ENCODE measurements at regions of chr10 and their contacts with region 1.

Region 1: DNA sequence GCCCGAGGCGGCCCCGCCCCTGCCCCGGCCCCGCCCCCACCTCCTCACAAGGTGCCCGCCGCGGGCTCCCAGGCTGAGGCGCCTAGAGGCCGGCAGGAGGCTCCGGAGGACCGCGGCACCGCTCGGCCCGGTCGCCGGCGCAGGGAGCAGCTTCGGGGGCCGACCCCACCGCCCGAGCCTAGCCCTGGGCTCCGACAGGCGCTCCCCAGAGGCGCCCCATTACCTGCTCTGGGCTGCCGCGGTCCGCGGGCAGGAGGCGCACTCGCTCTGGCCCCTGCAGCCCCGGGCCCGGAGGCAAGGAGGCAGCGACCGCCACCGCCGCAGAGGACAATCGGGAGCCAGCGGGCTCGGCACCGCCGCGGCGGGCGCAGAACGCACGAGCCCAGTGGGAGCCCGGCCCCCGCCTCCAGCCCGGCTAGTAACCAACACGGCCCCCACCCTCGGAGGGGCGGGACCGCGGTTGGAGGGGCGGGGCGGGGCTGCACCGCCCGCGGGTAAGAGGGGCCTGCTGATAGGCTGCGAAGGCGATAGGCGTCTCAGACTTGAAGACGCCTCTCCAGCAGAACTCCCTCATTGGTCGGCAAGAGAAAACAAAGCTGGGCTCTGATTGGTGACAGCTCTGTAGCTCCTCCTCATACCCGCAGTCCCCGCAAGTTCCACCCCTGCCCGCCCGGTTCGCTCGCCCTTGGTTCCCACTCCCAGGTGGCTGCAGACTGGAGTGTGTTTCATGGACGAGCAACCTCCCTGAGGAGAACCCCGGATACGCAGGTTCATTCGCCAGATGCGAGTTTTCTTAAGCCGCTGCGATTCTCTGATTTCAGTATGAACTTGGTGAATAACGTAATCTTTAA is at the start of gene MPP7:
- DNase-seq: peak; percentile 96 to 98 (median 97)
- ATAC-seq: peak; percentile 97
- H3K4me3 ChIP-seq: peak within 1 kb of the TSS; percentile 92
- H3K4me3 Mint-ChIP-seq: peak within 1 kb of the TSS; percentile 85 to 99 (median 93)
- H3K27ac ChIP-seq: peak within 1 kb of the TSS; percentile 86
- H3K27ac Mint-ChIP-seq: peak within 1 kb of the TSS; percentile 67 to 98 (median 94)
- H3K4me1 ChIP-seq: peaks cover 8 to 42% of the 10 kb centered on the region in 2 donors
- H3K4me1 Mint-ChIP-seq: peaks cover 27 to 80% (median 67%) of the 10 kb centered on the region in 7 donors
- H3K27me3 ChIP-seq: no peaks in the 10 kb centered on the region
- H3K27me3 Mint-ChIP-seq: peaks cover 0 to 51% (median 0%) of the 10 kb centered on the region in 5 donors
- total RNA-seq, gene MPP7: 9.7 to 44.7 (median 36.1) TPM

Region 2: GRCh38 chr10:28179006-28179742 is 123.7 kb before region 1 on chr10:
- CTCF ChIA-PET with region 1: no interaction called
- POLR2A ChIA-PET with region 1: no interaction called
- intact Hi-C with region 1: loop called (anchors 1 to 2 kb)
- DNase-seq: peak in 7 of 9 donors; percentile 18 to 63 (median 49)
- ATAC-seq: peak; percentile 86
- H3K4me3 ChIP-seq: peak overlapping the region; percentile 55
- H3K4me3 Mint-ChIP-seq: peak overlapping the region; percentile 0 to 98 (median 87)
- H3K27ac ChIP-seq: peak overlapping the region; percentile 54
- H3K27ac Mint-ChIP-seq: peak overlapping the region; percentile 77 to 98 (median 92)
- H3K4me1 ChIP-seq: peaks cover 10 to 12% of the 10 kb centered on the region in 2 donors
- H3K4me1 Mint-ChIP-seq: peaks cover 17 to 70% (median 55%) of the 10 kb centered on the region in 7 donors
- H3K27me3 ChIP-seq: no peaks in the 10 kb centered on the region
- H3K27me3 Mint-ChIP-seq: peaks cover 0 to 9% (median 0%) of the 10 kb centered on the region in 5 donors

Region 3: GRCh38 chr10:28250782-28251181 is 52.1 kb before region 1 on chr10:
- CTCF ChIA-PET with region 1: interaction called, 9 read pairs
- POLR2A ChIA-PET with region 1: interaction called, 6 read pairs
- intact Hi-C with region 1: loop called (anchors 1 kb)
- DNase-seq: peak in 5 of 9 donors; percentile 24 to 47 (median 43)
- ATAC-seq: peak; percentile 57
- H3K4me3 ChIP-seq: no peak overlapping the region
- H3K4me3 Mint-ChIP-seq: no peak overlapping the region
- H3K27ac ChIP-seq: no peak overlapping the region
- H3K27ac Mint-ChIP-seq: peak overlapping the region in 5 of 9 donors; percentile 3 to 80 (median 29)
- H3K4me1 ChIP-seq: no peaks in the 10 kb centered on the region
- H3K4me1 Mint-ChIP-seq: peaks cover 10 to 72% (median 50%) of the 10 kb centered on the region in 7 donors
- H3K27me3 ChIP-seq: no peaks in the 10 kb centered on the region
- H3K27me3 Mint-ChIP-seq: peaks cover 0 to 8% (median 0%) of the 10 kb centered on the region in 5 donors

Region 4: DNA sequence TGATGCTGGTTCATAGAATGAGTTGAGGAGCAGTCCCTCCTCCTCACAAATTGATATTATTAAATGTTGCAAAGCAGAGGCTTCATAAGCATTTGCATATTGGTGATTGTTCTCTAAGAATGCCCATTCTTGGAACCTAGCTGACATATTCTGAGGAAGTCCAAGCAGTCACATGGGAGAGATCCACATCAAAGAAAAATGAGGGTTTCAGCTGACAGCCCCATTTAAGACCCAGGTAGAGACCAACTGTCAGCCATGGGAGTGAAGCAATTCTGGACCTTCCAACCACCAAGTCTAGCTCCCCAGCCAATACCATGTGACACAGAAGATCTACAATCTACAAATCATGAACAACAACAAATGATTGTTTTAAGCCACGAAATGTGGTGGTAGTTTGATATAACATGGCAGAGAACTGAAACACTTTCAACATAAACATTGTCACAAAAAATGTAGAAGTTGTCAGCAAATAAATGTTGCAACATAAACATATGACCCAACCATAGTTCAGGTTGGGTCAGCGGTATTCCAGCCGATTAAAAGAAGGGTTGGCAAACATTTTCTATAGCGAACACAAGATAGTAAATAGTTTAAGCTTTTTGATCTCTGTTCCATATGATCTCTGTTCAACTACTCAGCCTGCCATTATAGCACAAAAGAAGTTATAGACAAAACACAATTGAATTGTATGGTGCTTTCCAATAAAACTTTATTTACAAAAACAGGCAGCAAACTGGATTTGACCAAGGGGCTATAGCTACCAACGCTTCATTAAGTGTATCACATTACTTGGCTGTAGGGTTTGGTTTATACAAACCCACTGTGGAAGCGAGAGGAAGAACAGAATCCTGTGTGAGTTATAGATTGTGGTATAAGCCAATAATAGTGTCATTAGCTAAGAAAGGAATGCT is 41.4 kb after region 1 on chr10:
- CTCF ChIA-PET with region 1: interaction called, 5 read pairs
- POLR2A ChIA-PET with region 1: interaction called, 11 read pairs
- intact Hi-C with region 1: no loop called
- DNase-seq: no peak
- ATAC-seq: no peak
- H3K4me3 ChIP-seq: no peak overlapping the region
- H3K4me3 Mint-ChIP-seq: no peak overlapping the region
- H3K27ac ChIP-seq: no peak overlapping the region
- H3K27ac Mint-ChIP-seq: peak overlapping the region in 1 of 9 donors; percentile 24
- H3K4me1 ChIP-seq: peaks cover 0 to 4% of the 10 kb centered on the region in 2 donors
- H3K4me1 Mint-ChIP-seq: peaks cover 5 to 16% (median 12%) of the 10 kb centered on the region in 7 donors
- H3K27me3 ChIP-seq: no peaks in the 10 kb centered on the region
- H3K27me3 Mint-ChIP-seq: peaks cover 0 to 25% (median 0%) of the 10 kb centered on the region in 5 donors

Region 5: DNA sequence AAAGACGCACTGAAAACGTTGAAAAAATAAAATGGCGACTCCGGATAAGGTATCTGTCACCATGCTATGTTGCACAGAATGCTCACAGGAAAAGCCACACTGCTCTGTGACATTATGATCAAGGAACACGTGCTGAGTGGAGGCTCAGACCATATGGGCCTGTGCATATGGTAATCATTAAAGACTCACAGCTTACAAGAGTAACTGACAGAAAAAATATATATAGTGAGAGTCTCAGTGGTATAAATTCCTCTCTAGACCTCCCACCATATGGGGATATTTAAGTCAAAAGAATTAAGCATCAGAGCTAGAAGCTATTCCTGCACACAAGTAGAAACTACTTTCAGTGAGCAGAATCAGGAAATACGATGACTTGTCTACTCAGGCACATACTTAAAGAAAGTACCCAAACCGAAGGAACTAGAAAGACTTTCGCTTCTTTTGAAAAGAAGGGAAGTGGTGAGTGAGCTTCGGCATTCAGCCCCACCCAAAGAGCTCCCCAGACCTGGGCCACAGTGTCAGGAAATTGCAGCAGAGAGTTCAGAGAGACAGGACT is 65.1 kb after region 1 on chr10:
- CTCF ChIA-PET with region 1: interaction called, 45 read pairs
- POLR2A ChIA-PET with region 1: interaction called, 58 read pairs
- intact Hi-C with region 1: loop called (anchors 1 kb)
- DNase-seq: peak in 8 of 9 donors; percentile 54 to 88 (median 83)
- ATAC-seq: peak; percentile 97
- H3K4me3 ChIP-seq: peak overlapping the region; percentile 18
- H3K4me3 Mint-ChIP-seq: peak overlapping the region; percentile 63 to 93 (median 76)
- H3K27ac ChIP-seq: peak overlapping the region; percentile 78
- H3K27ac Mint-ChIP-seq: peak overlapping the region; percentile 90 to 99 (median 96)
- H3K4me1 ChIP-seq: peaks cover 44 to 54% of the 10 kb centered on the region in 2 donors
- H3K4me1 Mint-ChIP-seq: peaks cover 39 to 80% (median 60%) of the 10 kb centered on the region in 7 donors
- H3K27me3 ChIP-seq: no peaks in the 10 kb centered on the region
- H3K27me3 Mint-ChIP-seq: peaks cover 0 to 5% (median 0%) of the 10 kb centered on the region in 5 donors

Region 6: GRCh38 chr10:28393966-28394568 is 91.2 kb after region 1 on chr10:
- CTCF ChIA-PET with region 1: interaction called, 6 read pairs
- POLR2A ChIA-PET with region 1: no interaction called
- intact Hi-C with region 1: loop called in 1 of 2 experiments (anchors 1 kb)
- DNase-seq: peak; percentile 36 to 70 (median 53)
- ATAC-seq: peak; percentile 87
- H3K4me3 ChIP-seq: no peak overlapping the region
- H3K4me3 Mint-ChIP-seq: no peak overlapping the region
- H3K27ac ChIP-seq: no peak overlapping the region
- H3K27ac Mint-ChIP-seq: peak overlapping the region in 2 of 9 donors; percentile 12 to 35
- H3K4me1 ChIP-seq: no peaks in the 10 kb centered on the region
- H3K4me1 Mint-ChIP-seq: peaks cover 0 to 6% (median 5%) of the 10 kb centered on the region in 7 donors
- H3K27me3 ChIP-seq: no peaks in the 10 kb centered on the region
- H3K27me3 Mint-ChIP-seq: peaks cover 0 to 6% (median 0%) of the 10 kb centered on the region in 5 donors

Region 7: GRCh38 chr10:28410420-28411135 is 107.7 kb after region 1 on chr10:
- CTCF ChIA-PET with region 1: no interaction called
- POLR2A ChIA-PET with region 1: no interaction called
- intact Hi-C with region 1: no loop called
- DNase-seq: no peak
- ATAC-seq: no peak
- H3K4me3 ChIP-seq: no peak overlapping the region
- H3K4me3 Mint-ChIP-seq: no peak overlapping the region
- H3K27ac ChIP-seq: no peak overlapping the region
- H3K27ac Mint-ChIP-seq: no peak overlapping the region
- H3K4me1 ChIP-seq: no peaks in the 10 kb centered on the region
- H3K4me1 Mint-ChIP-seq: peaks cover 0 to 7% (median 0%) of the 10 kb centered on the region in 7 donors
- H3K27me3 ChIP-seq: peaks cover under 1 to 3% of the 10 kb centered on the region in 2 donors
- H3K27me3 Mint-ChIP-seq: peaks cover 5 to 19% (median 16%) of the 10 kb centered on the region in 5 donors

Region 8: GRCh38 chr10:28676968-28677887 is 374.4 kb after region 1 on chr10 and contains the start of gene BAMBI:
- CTCF ChIA-PET with region 1: no interaction called
- POLR2A ChIA-PET with region 1: no interaction called
- intact Hi-C with region 1: loop called in 1 of 2 experiments (anchors 10 kb)
- DNase-seq: peak; percentile 86 to 95 (median 90)
- ATAC-seq: peak; percentile 97
- H3K4me3 ChIP-seq: peak within 1 kb of the TSS; percentile 57
- H3K4me3 Mint-ChIP-seq: peak within 1 kb of the TSS; percentile 79 to 94 (median 84)
- H3K27ac ChIP-seq: no peak within 1 kb of the TSS
- H3K27ac Mint-ChIP-seq: peak within 1 kb of the TSS in 3 of 9 donors; percentile 24 to 52 (median 43)
- H3K4me1 ChIP-seq: peaks cover 0 to 26% of the 10 kb centered on the region in 2 donors
- H3K4me1 Mint-ChIP-seq: peaks cover 19 to 32% (median 26%) of the 10 kb centered on the region in 7 donors
- H3K27me3 ChIP-seq: peaks cover 11 to 20% of the 10 kb centered on the region in 2 donors
- H3K27me3 Mint-ChIP-seq: peaks cover 63 to 80% (median 70%) of the 10 kb centered on the region in 5 donors
- total RNA-seq, gene BAMBI: 0.12 to 1.6 (median 0.80) TPM in 4 of 5 experiments, not detected in the other